Posterior vena cava (tissue), 2 donors: ENCODE measurements at regions of chr3 and their contacts with region 1.

Region 1: GRCh38 chr3:113304856-113305540 is 93.6 kb downstream of the BOC start:
- DNase-seq: no peak

Region 2: GRCh38 chr3:113231827-113232253 is 73.2 kb before region 1 on chr3:
- intact Hi-C with region 1: no loop called
- DNase-seq: no peak

Region 3: GRCh38 chr3:113377158-113377557 is 72.2 kb after region 1 on chr3:
- intact Hi-C with region 1: loop called in 1 of 2 experiments (anchors 2 kb)
- DNase-seq: no peak

Region 4: GRCh38 chr3:113795693-113796092 is 490.7 kb after region 1 on chr3:
- intact Hi-C with region 1: loop called in 1 of 2 experiments (anchors 5 kb)
- DNase-seq: no peak